OCI-LY7 (cell line): ENCODE measurements at regions of chr17 and their contacts with region 1.

Region 1: DNA sequence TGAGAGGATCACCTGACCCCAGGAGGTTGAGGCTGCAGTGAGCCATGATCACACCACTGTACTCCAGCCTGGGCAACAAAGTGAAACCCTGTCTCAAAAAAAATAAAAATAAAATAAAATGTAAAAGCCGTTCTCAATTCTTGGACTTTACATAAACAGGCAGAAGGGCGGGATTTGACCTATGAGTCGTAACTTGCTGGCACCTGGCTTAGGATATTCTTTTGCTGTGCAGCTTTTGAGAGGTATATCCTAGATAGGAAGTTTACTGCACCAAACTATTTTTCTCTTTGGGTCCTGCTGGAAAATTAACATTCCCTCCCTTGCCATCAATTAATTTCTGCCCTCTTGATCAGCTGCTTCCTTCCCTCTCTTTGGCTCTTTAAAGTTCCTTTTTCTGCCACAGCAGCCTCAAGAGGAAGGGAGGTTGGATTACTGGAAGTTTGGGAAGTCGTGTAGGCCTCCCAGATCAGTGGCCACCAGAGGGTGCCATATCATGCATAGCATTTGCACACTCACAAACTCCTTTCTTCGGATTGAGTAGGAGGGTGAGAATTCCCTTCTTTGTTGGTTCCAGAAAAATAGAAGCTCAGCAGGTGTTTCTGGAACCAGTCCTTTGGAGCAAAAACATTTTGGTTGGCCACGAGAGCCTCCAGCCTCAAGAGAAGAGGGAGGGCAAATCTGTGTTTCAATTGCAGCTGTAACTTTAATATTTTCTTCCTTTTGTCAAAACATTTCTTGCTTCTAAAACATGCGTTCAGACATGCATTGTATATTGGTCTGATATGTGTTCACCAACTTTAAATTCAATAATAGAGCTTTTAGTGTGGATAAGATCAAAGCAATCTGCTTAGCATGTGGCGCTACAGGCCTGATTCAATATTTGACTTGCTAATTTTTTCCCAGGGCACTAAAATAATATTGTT is 147.3 kb downstream of the CCDC182 start:
- DNase-seq: peak; percentile 42
- H3K4me3 ChIP-seq: no peak overlapping the region
- H3K27ac ChIP-seq: peak overlapping the region; percentile 3
- H3K4me1 ChIP-seq: peaks cover 45% of the 10 kb centered on the region
- CTCF ChIP-seq: peak; percentile 97

Region 2: GRCh38 chr17:57739402-57740392 is 141.9 kb after region 1 on chr17:
- CTCF ChIA-PET with region 1: no interaction called
- POLR2A ChIA-PET with region 1: no interaction called
- intact Hi-C with region 1: loop called (anchors 5 kb)
- DNase-seq: peak; percentile 69
- H3K4me3 ChIP-seq: no peak overlapping the region
- H3K27ac ChIP-seq: no peak overlapping the region
- H3K4me1 ChIP-seq: peaks cover 22% of the 10 kb centered on the region
- CTCF ChIP-seq: peak; percentile 83

Region 3: DNA sequence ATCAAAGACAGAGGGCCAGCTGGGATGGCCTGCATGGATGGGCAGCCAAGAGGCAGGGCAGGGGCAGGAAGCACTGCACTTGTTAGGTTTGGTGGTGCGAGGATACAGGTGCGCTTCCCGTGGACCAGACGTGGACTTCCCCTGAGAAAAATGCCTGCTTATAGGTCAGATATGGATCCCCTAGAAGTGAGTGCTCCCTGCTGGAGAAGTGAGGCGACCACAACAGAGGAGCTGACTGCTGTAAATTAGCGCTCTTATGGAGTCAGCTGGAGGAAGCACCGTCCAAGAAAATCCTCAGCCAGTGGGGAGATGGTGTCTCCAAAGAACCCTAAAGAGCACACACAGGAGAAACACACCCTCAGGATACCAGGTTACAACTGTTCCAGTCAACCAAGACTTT is 175.0 kb after region 1 on chr17:
- CTCF ChIA-PET with region 1: no interaction called
- POLR2A ChIA-PET with region 1: no interaction called
- intact Hi-C with region 1: no loop called
- DNase-seq: no peak
- H3K4me3 ChIP-seq: no peak overlapping the region
- H3K27ac ChIP-seq: no peak overlapping the region
- H3K4me1 ChIP-seq: no peaks in the 10 kb centered on the region
- CTCF ChIP-seq: no peak